Posterior vena cava (tissue), 2 donors: ENCODE measurements at regions of chr1 and their contacts with region 1.

Region 1: DNA sequence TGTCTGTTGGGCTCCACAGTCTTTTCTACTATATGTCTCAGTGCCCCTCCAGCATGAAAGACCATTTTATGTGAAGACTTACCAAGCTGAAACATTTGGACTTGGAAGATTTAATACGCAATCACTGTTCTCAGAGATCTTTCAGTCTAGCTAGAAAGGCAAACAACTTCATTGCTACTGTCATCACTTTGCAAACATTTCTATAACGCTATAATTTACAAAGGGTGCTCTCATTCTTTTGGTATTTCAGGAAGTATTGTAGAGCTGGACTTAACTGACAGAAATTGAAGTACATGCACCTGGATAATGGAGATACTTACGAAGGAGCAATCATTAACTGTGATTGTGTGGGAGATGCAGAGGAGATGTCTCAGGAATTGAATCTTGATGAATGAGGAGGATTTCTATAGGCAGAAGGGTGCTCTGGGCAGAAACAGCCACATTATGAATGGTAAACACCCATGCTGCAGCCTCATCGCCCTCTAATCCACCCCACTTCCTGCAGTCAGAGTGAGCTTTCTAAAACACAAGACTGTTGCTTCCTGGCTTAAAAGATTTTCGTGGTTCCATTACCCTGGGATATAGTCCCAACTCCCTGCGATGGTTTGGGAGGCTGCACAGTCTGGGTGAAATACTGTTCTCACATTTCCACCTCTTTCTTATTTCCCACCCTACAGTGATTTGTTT is 75.1 kb upstream of the GNG12 start:
- DNase-seq: no peak

Region 2: DNA sequence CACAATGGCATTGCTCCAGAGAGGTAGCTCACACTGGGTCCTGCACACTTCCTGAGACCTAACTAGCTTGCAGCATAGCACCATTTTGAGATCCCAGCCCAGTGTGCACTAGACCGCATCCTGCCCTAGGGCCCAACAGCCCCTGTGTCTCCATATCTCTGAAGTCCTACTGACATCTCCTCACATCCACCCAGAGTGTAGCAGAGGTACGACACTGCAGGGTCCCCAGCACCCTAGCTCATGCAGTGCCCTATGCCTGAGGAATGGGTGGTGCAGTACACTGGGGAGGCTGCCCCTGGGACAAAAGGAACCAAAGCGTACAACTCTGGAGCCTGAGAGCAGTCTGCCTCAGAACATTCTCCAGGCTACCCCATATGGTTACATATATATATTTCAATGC is 699.9 kb after region 1 on chr1:
- intact Hi-C with region 1: loop called in 1 of 2 experiments (anchors 5 kb)
- DNase-seq: no peak